BJ (cell line): ENCODE measurements at regions of chr2 and their contacts with region 1.

Region 1: GRCh38 chr2:27170581-27171333 is 22.0 kb downstream of the TCF23 start:
- DNase-seq: no peak
- H3K4me3 ChIP-seq: no peak overlapping the region
- H3K27me3 ChIP-seq: peaks cover 24% of the 10 kb centered on the region
- CTCF ChIP-seq: no peak

Region 2: GRCh38 chr2:27102329-27102728 is 68.4 kb before region 1 on chr2:
- CTCF ChIA-PET with region 1: interaction called, 11 read pairs
- POLR2A ChIA-PET with region 1: no interaction called
- DNase-seq: no peak
- H3K4me3 ChIP-seq: no peak overlapping the region
- H3K27me3 ChIP-seq: peaks cover 1% of the 10 kb centered on the region; the same call in 1 of the 2 replicates
- CTCF ChIP-seq: no peak

Region 3: GRCh38 chr2:27185331-27186026 is 14.7 kb after region 1 on chr2:
- CTCF ChIA-PET with region 1: interaction called, 24 read pairs
- POLR2A ChIA-PET with region 1: no interaction called
- DNase-seq: peak; percentile 80
- H3K4me3 ChIP-seq: no peak overlapping the region
- H3K27me3 ChIP-seq: no peaks in the 10 kb centered on the region; the same call in 1 of the 2 replicates
- CTCF ChIP-seq: no peak

Region 4: DNA sequence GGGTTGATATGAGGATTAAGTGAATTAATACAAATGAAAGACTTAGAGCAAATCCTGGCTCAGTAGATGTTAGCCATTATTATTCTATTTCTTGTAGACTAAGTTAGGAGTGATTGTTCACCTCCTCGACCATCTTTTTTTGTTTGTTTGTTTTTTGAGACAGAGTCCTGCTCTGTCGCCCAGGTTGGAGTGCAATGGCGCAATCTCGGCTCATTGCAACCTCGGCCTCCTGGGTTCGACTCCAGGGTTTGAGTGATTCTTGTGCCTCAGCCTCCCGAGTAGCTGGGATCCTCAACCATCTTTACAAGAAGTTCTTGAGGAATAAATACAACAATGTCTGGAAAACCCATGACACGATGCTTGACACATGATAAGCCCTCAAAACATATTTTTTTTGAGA is 124.2 kb after region 1 on chr2:
- CTCF ChIA-PET with region 1: no interaction called
- POLR2A ChIA-PET with region 1: no interaction called
- DNase-seq: no peak
- H3K4me3 ChIP-seq: no peak overlapping the region
- H3K27me3 ChIP-seq: peaks cover 11% of the 10 kb centered on the region
- CTCF ChIP-seq: no peak

Region 5: DNA sequence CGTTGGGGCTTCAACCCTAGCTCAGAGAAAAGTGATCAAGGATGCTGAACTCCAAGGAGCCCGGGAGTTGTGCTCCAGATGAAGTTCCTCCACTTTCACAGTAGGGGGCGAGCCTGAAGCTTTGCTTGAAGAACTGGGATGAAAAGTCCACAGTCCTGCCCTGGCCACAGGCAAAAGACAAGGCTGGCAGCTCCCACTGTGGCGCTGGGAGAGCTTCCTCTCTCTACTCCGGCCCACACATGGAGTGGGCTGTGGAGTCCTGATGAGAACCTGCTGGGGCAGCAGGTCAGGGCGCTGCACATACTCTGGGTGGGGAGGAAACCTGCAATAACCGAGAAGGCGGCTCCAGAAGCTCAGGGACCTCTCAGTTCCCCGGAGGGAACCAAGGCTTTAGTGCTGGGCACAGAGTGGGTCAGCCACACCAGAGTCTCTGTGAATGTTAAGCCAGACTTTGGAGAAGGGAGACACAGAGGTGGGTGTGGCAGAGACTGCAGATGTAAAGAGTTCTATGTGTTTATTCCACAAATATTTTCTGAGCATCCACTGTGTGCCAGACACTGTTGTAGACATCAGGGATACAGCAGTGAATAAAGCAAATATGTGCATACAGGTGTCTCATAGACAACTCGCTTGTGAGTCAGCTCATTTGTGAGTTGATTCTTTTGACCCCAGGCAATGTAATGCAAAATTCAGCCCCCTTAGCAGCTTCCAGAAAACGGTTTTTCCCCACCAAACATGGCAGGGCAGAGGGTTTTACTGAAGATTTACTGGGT is 552.8 kb after region 1 on chr2:
- CTCF ChIA-PET with region 1: no interaction called
- POLR2A ChIA-PET with region 1: no interaction called
- DNase-seq: no peak
- H3K4me3 ChIP-seq: no peak overlapping the region
- H3K27me3 ChIP-seq: no peaks in the 10 kb centered on the region
- CTCF ChIP-seq: peak; percentile 89